ENCODE measurements at regions of chr10 and their contacts with region 1.

Region 1: DNA sequence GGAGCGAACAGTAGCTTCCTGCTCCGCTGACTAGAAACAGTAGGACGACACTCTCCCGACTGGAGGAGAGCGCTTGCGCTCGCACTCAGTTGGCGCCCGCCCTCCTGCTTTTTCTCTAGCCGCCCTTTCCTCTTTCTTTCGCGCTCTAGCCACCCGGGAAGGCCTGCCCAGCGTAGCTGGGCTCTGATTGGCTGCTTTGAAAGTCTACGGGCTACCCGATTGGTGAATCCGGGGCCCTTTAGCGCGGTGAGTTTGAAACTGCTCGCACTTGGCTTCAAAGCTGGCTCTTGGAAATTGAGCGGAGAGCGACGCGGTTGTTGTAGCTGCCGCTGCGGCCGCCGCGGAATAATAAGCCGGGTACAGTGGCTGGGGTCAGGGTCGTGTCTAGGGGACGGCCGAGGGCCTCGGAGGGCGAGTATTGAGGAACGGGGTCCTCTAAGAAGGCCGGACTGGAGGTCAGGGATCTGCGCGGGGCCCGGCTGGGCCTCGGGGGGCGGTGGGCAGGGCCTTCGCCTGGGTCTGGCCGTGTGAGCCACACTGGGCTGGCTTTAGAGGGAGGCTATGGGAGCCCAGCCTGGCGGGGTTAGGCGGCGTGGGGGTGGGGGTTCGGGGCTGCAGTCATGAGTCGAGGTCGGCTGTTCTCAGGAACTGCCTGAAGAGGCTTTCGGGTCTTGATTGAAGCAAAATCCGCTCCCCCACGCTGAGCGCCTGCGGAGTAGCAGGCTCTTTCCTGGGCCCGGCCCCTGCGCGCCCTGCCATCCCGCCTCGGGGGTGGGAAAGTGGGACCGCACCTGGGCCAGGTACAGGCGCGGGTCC is at the start of gene CDK1:
- DNase-seq: peak; percentile 98
- H3K4me3 ChIP-seq: peak within 1 kb of the TSS; percentile 89
- H3K27ac ChIP-seq: peak within 1 kb of the TSS; percentile 84
- H3K4me1 ChIP-seq: peaks cover 35% of the 10 kb centered on the region
- CTCF ChIP-seq: no peak
- total RNA-seq, gene CDK1: 145 and 156 TPM in 2 replicates

Region 2: GRCh38 chr10:60444494-60445064 is 333.8 kb before region 1 on chr10:
- CTCF ChIA-PET with region 1: no interaction called
- POLR2A ChIA-PET with region 1: no interaction called
- intact Hi-C with region 1: loop called (anchors 5 kb)
- DNase-seq: no peak
- H3K4me3 ChIP-seq: no peak overlapping the region
- H3K27ac ChIP-seq: no peak overlapping the region
- H3K4me1 ChIP-seq: no peaks in the 10 kb centered on the region
- CTCF ChIP-seq: peak; percentile 78

Region 3: GRCh38 chr10:60798031-60798430 is 19.6 kb after region 1 on chr10:
- CTCF ChIA-PET with region 1: no interaction called
- POLR2A ChIA-PET with region 1: interaction called, 25 read pairs
- intact Hi-C with region 1: no loop called
- DNase-seq: no peak
- H3K4me3 ChIP-seq: no peak overlapping the region
- H3K27ac ChIP-seq: no peak overlapping the region
- H3K4me1 ChIP-seq: no peaks in the 10 kb centered on the region
- CTCF ChIP-seq: no peak

Region 4: DNA sequence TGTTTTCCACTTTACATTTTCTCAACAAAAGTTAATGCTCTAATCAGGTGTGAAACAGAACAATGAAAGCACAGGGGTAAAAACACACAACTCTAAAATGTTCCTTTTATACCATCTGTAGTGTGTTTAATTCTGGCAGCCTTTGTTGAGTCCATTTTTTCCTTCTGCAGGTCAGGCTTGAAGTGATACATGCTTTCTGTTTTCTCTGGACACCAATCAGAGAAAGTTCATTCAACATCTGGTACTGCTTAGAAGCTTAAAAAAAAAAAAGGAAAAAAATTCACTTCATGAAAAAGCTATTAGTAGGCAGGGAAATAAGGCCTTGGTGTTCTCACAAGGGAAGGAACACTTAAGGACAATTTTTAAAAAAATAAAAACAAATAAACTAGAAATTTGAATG is 396.9 kb after region 1 on chr10:
- CTCF ChIA-PET with region 1: no interaction called
- POLR2A ChIA-PET with region 1: no interaction called
- intact Hi-C with region 1: no loop called
- DNase-seq: no peak
- H3K4me3 ChIP-seq: no peak overlapping the region
- H3K27ac ChIP-seq: no peak overlapping the region
- H3K4me1 ChIP-seq: no peaks in the 10 kb centered on the region
- CTCF ChIP-seq: no peak

Region 5: DNA sequence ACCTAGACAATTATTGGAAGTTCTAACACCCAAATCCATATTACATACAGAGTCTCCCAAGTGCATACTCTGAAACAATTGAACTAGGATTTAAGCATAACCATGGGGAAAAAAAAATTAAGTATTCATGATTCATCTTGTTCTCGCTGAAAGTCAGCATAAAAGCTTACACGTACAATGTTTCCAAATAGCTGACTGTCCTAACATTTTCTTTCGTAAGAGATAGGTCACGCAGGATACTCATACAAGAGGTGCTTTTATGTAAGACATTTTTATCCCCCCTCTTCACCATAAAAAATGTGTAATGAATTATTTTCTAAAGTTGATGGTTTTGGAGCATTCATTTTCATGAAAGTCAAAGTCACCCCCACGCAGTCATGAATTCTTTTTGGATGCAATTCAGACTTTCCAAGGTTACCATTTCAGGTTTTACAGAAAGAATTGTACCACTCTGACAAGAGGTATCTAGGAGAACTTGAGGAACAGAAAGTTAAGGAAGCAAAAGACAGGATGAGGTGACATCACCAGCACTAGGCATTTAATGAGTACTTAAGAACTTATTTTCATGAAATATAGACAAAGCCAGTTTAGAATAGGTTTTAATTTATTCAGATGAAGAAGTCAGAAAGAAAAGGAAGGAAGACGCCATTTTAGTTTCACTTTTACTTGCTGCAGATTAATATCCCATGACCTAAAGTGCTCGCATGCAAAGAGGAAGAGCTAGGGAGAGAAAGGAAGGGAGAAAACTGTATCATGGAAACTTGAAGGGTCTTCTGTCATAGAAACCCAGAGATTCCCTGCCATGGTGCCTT is 619.0 kb after region 1 on chr10:
- CTCF ChIA-PET with region 1: no interaction called
- POLR2A ChIA-PET with region 1: no interaction called
- intact Hi-C with region 1: no loop called
- DNase-seq: peak; percentile 4
- H3K4me3 ChIP-seq: peak overlapping the region; percentile 14
- H3K27ac ChIP-seq: no peak overlapping the region
- H3K4me1 ChIP-seq: no peaks in the 10 kb centered on the region
- CTCF ChIP-seq: no peak